CD4-positive, alpha-beta memory T cell (primary cell): ENCODE measurements at regions of chr1 and their contacts with region 1.

Region 1: GRCh38 chr1:222792744-222793143 is 22.1 kb upstream of the DISP1 start:
- DNase-seq: peak in 2 of 5 donors; percentile 3 to 17
- H3K4me3 ChIP-seq: no peak overlapping the region
- H3K4me3 Mint-ChIP-seq: no peak overlapping the region
- H3K27ac ChIP-seq: no peak overlapping the region
- H3K27ac Mint-ChIP-seq: no peak overlapping the region
- H3K4me1 ChIP-seq: no peaks in the 10 kb centered on the region
- H3K4me1 Mint-ChIP-seq: no peaks in the 10 kb centered on the region
- H3K27me3 ChIP-seq: no peaks in the 10 kb centered on the region
- H3K27me3 Mint-ChIP-seq: peaks cover 1% of the 10 kb centered on the region in 2 donors

Region 2: GRCh38 chr1:223081181-223081994 is 288.6 kb after region 1 on chr1:
- CTCF ChIA-PET with region 1: interaction called, 7 read pairs
- POLR2A ChIA-PET with region 1: no interaction called
- intact Hi-C with region 1: loop called (anchors 1 kb)
- DNase-seq: peak; percentile 56 to 70 (median 64)
- H3K4me3 ChIP-seq: peak overlapping the region in 1 of 2 donors; percentile 44
- H3K4me3 Mint-ChIP-seq: peak overlapping the region; percentile 48 to 78 (median 68)
- H3K27ac ChIP-seq: no peak overlapping the region
- H3K27ac Mint-ChIP-seq: peak overlapping the region in 1 of 7 donors; percentile 48
- H3K4me1 ChIP-seq: peaks cover 4% of the 10 kb centered on the region
- H3K4me1 Mint-ChIP-seq: peaks cover 0 to 2% (median 0%) of the 10 kb centered on the region in 4 donors
- H3K27me3 ChIP-seq: no peaks in the 10 kb centered on the region
- H3K27me3 Mint-ChIP-seq: peaks cover 2 to 8% of the 10 kb centered on the region in 2 donors

Region 3: GRCh38 chr1:223087291-223088255 is 294.8 kb after region 1 on chr1:
- CTCF ChIA-PET with region 1: interaction called, 12 read pairs
- POLR2A ChIA-PET with region 1: no interaction called
- intact Hi-C with region 1: loop called (anchors 1 kb)
- DNase-seq: no peak
- H3K4me3 ChIP-seq: no peak overlapping the region
- H3K4me3 Mint-ChIP-seq: no peak overlapping the region
- H3K27ac ChIP-seq: no peak overlapping the region
- H3K27ac Mint-ChIP-seq: no peak overlapping the region
- H3K4me1 ChIP-seq: no peaks in the 10 kb centered on the region
- H3K4me1 Mint-ChIP-seq: peaks cover 0 to 10% (median 1%) of the 10 kb centered on the region in 4 donors
- H3K27me3 ChIP-seq: no peaks in the 10 kb centered on the region
- H3K27me3 Mint-ChIP-seq: no peaks in the 10 kb centered on the region

Region 4: DNA sequence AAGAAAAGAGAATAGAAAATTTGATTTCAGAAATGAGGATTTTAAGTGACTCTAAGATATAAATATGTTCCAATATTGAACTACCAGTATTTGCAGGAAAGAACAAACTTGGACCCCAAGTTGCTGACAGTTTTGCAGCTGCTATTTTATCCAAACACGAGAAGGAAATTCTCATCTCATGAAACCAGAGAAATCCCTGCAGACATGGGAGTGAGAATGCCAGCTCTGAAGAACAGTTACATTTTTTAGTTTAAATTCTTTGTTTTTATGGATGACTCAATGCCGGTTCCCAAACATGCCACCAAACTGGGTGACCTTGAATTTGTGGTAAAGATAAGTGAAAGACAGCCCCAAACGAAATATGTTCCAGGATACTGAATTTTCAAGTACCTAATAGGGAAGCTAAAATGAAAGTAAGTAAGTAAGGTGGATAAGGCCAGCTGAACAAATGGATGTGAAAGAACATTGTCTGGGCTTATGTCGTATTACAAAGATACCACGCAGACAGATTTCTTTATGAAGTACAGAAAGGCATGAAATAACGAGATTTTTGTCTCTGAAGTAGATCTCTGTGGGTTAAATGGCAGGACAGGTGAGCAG is 330.4 kb after region 1 on chr1:
- CTCF ChIA-PET with region 1: interaction called, 13 read pairs
- POLR2A ChIA-PET with region 1: no interaction called
- intact Hi-C with region 1: loop called (anchors 1 kb)
- DNase-seq: no peak
- H3K4me3 ChIP-seq: peak overlapping the region in 1 of 2 donors; percentile 2
- H3K4me3 Mint-ChIP-seq: peak overlapping the region; percentile 63 to 85 (median 77)
- H3K27ac ChIP-seq: no peak overlapping the region
- H3K27ac Mint-ChIP-seq: peak overlapping the region in 1 of 7 donors; percentile 30
- H3K4me1 ChIP-seq: peaks cover 5% of the 10 kb centered on the region
- H3K4me1 Mint-ChIP-seq: peaks cover 6 to 8% (median 7%) of the 10 kb centered on the region in 4 donors
- H3K27me3 ChIP-seq: no peaks in the 10 kb centered on the region
- H3K27me3 Mint-ChIP-seq: no peaks in the 10 kb centered on the region

Region 5: DNA sequence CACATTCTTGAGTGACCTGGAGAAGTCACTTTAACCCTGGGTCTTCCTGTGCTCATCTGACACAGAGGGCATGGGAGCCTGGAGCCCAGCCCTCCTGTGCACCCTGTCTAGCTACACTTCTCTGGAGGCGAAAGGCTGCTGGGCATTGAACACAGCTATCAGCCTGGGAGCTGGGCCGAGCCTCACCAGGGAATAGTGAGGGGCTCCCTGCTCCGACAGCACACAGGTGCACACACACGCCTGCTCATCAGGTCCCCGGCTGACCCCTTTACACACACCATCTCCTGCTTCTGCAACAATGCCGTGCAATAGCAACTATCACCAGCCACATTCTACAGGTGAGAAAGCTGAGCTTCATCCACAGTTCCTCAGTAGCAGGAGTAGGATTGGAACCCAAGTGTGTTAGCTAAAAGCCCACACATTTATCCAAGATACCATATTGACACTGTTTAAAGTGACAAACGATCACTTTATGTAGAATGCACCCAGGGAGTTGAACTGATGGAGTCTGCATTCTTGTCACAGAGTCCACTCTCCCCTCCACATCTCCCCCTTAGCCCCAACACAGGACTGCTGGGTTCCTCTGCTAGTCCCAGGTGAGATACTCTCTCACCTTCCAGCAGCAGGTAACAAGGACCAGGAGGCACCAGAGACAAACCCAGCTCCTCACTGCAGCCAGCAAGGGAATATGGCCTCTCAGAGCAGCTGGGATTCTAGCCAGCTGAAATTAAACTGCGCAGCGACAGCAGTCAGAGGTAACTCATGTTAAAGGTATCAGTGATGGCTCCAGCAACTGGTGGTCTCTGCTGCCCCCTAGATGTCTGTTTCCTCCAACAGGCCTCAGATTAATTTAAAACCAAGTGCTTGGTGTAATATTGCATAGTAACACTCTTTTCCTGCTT is 891.1 kb after region 1 on chr1:
- CTCF ChIA-PET with region 1: no interaction called
- POLR2A ChIA-PET with region 1: no interaction called
- intact Hi-C with region 1: loop called (anchors 5 kb)
- DNase-seq: peak; percentile 43 to 61 (median 52)
- H3K4me3 ChIP-seq: no peak overlapping the region
- H3K4me3 Mint-ChIP-seq: no peak overlapping the region
- H3K27ac ChIP-seq: no peak overlapping the region
- H3K27ac Mint-ChIP-seq: peak overlapping the region in 1 of 7 donors; percentile 67
- H3K4me1 ChIP-seq: no peaks in the 10 kb centered on the region
- H3K4me1 Mint-ChIP-seq: no peaks in the 10 kb centered on the region
- H3K27me3 ChIP-seq: no peaks in the 10 kb centered on the region
- H3K27me3 Mint-ChIP-seq: peaks cover 8 to 9% of the 10 kb centered on the region in 2 donors